Cardiac septum (tissue), 1 donor: ENCODE measurements at regions of chr9 and their contacts with region 1.

Region 1: GRCh38 chr9:2620919-2621679 is 488 bp upstream of the VLDLR start:
- DNase-seq: peak; percentile 85

Region 2: DNA sequence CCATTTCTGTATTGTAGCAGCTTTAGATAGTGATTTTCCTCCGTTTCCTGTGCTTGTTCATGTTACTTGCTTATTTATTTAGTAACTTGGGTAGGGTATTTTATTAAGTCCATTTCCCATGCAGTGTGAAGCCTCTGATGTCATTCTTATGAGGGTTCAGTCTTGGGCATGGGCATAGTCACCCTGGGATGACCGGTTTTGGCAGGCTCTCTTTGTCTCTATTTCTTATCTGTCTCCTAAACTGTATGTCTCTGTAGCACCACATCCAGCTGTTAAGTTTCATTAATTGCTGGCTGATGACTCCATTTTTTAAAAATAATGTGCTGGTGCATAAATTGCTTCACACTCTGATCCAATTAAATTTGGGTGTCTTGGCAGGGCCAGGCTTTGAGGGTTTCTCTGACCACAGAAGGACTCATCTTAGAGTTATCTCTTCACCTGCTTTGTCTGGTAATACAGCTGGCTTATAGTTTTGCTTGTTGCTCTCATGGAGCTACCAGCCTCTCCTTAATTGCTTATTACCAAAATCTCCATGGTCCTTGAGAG is 172.8 kb before region 1 on chr9:
- intact Hi-C with region 1: no loop called
- DNase-seq: no peak

Region 3: DNA sequence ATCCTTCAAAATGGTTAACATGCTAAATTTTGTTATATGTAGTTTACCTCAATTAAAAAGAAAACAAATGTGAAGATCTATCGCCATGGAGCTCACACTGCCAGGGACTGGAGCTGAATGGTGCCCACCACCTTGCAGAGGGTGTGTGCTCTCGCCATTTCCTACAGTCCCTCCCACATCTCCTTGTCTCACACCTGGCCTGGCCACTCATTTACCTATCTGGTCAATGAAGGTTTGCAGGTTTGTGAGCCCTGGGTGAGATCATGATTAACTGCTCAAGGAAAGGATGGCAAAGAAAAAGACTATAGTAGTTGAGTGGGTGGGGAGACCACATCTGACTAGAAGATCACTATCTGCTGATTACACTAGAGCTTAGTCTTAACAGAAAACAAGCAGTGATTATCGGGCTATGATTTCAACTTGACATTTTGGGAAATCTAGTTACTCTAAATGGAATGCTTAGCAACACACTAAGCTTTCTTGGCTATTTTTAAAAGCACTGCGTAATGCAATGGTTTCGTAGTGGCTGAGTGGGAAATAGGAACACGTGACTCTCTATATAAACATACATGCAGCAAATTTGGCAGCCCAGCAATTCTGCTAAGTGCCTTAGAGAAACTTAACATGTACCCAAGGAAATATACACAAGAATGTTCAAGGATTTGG is 195.5 kb after region 1 on chr9:
- intact Hi-C with region 1: loop called (anchors 5 kb)
- DNase-seq: no peak